ENCODE measurements at regions of chr22 and their contacts with region 1.

Region 1: GRCh38 chr22:37267135-37267587 is 15.1 kb upstream of the CYTH4 start:
- DNase-seq: peak; percentile 46 to 84 (median 70)
- ATAC-seq: peak; percentile 91
- H3K4me3 ChIP-seq: peak overlapping the region; percentile 71
- H3K4me3 Mint-ChIP-seq: peak overlapping the region; percentile 87
- H3K27ac ChIP-seq: peak overlapping the region; percentile 67 to 86
- H3K27ac Mint-ChIP-seq: peak overlapping the region; percentile 91
- H3K4me1 ChIP-seq: peaks cover 24% of the 10 kb centered on the region
- H3K4me1 Mint-ChIP-seq: peaks cover 40% of the 10 kb centered on the region
- H3K27me3 ChIP-seq: no peaks in the 10 kb centered on the region
- H3K27me3 Mint-ChIP-seq: no peaks in the 10 kb centered on the region
- CTCF ChIP-seq: peak; percentile 99

Region 2: GRCh38 chr22:37282385-37282677 is 15.2 kb after region 1 on chr22 and contains the start of gene CYTH4:
- CTCF ChIA-PET with region 1: interaction called, 11 read pairs
- POLR2A ChIA-PET with region 1: interaction called, 19 read pairs
- intact Hi-C with region 1: loop called (anchors 2 kb)
- DNase-seq: peak; percentile 36 to 87 (median 76)
- ATAC-seq: peak; percentile 86
- H3K4me3 ChIP-seq: peak within 1 kb of the TSS; percentile 99
- H3K4me3 Mint-ChIP-seq: peak within 1 kb of the TSS; percentile 97
- H3K27ac ChIP-seq: peak within 1 kb of the TSS; percentile 78 to 90
- H3K27ac Mint-ChIP-seq: peak within 1 kb of the TSS; percentile 96
- H3K4me1 ChIP-seq: peaks cover 50% of the 10 kb centered on the region
- H3K4me1 Mint-ChIP-seq: peaks cover 61% of the 10 kb centered on the region
- H3K27me3 ChIP-seq: no peaks in the 10 kb centered on the region
- H3K27me3 Mint-ChIP-seq: no peaks in the 10 kb centered on the region
- CTCF ChIP-seq: no peak
- total RNA-seq, gene CYTH4: 134 to 138 TPM

Region 3: DNA sequence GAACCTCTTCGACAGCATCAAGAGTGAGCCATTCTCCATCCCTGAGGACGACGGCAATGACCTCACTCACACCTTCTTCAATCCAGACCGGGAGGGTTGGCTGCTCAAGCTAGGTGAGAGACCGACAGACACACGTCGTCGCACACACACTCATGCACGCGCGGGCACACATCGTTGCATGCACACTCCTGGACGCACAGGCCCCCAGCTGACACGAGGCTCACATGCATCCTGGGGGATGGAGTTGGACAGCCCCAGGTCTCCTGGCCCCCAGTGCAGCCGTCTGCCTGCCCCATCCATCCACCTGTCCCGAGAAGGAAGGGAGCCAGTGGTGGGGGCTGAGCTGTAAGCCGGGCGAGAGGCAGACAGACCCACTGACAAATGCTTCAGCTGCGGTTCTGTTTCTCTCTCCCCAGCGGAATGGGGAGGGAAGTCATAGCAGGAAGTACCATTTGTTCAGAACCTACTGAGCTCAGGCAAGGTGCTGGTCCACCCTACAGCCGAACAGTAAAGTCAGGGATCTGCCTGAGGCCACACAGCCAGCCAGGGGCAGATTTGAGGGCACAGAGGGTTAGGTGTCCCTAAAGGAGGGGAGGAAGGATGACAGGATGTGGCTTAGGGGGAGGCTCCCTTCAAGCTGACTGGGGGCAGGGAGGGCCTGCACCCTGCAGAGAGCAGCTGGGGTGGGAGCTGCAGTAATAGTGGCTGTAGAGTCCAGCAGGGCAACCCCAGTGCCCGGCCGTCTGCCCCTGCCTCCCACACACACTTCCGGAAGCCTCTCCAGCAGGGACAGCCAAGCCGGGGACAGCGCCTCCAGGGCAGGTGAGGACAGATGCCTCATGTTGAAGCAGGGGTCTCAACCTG is 42.3 kb after region 1 on chr22:
- CTCF ChIA-PET with region 1: interaction called, 3 read pairs
- POLR2A ChIA-PET with region 1: interaction called, 20 read pairs
- intact Hi-C with region 1: no loop called
- DNase-seq: peak; percentile 13 to 88 (median 49)
- ATAC-seq: peak; percentile 56
- H3K4me3 ChIP-seq: peak overlapping the region; percentile 30
- H3K4me3 Mint-ChIP-seq: peak overlapping the region; percentile 77
- H3K27ac ChIP-seq: peak overlapping the region; percentile 47 to 81
- H3K27ac Mint-ChIP-seq: peak overlapping the region; percentile 95
- H3K4me1 ChIP-seq: peaks cover 100% of the 10 kb centered on the region
- H3K4me1 Mint-ChIP-seq: peaks cover 86% of the 10 kb centered on the region
- H3K27me3 ChIP-seq: no peaks in the 10 kb centered on the region
- H3K27me3 Mint-ChIP-seq: no peaks in the 10 kb centered on the region
- CTCF ChIP-seq: no peak

Region 4: DNA sequence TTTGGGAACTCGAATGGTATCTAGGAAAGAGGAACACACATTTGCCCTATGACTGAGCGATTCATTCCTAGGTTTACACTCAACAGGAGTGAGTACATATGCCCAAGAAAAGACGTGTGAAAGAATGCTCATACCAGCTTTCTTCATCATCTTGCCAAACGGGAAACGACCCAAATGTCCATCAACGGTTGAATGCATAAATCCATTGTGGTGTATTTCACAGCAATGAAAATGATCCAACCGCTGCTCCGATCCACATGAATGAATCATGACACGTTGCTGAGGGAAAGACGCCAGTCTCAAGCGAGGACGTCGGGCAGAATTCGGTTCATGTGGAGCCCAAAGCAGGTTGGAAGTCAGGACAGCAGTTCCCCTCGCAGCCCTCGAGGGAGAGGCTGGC is 86.7 kb after region 1 on chr22:
- CTCF ChIA-PET with region 1: no interaction called
- POLR2A ChIA-PET with region 1: no interaction called
- intact Hi-C with region 1: no loop called
- DNase-seq: no peak
- ATAC-seq: no peak
- H3K4me3 ChIP-seq: no peak overlapping the region
- H3K4me3 Mint-ChIP-seq: no peak overlapping the region
- H3K27ac ChIP-seq: no peak overlapping the region
- H3K27ac Mint-ChIP-seq: no peak overlapping the region
- H3K4me1 ChIP-seq: no peaks in the 10 kb centered on the region
- H3K4me1 Mint-ChIP-seq: no peaks in the 10 kb centered on the region
- H3K27me3 ChIP-seq: no peaks in the 10 kb centered on the region
- H3K27me3 Mint-ChIP-seq: no peaks in the 10 kb centered on the region
- CTCF ChIP-seq: no peak

Region 5: DNA sequence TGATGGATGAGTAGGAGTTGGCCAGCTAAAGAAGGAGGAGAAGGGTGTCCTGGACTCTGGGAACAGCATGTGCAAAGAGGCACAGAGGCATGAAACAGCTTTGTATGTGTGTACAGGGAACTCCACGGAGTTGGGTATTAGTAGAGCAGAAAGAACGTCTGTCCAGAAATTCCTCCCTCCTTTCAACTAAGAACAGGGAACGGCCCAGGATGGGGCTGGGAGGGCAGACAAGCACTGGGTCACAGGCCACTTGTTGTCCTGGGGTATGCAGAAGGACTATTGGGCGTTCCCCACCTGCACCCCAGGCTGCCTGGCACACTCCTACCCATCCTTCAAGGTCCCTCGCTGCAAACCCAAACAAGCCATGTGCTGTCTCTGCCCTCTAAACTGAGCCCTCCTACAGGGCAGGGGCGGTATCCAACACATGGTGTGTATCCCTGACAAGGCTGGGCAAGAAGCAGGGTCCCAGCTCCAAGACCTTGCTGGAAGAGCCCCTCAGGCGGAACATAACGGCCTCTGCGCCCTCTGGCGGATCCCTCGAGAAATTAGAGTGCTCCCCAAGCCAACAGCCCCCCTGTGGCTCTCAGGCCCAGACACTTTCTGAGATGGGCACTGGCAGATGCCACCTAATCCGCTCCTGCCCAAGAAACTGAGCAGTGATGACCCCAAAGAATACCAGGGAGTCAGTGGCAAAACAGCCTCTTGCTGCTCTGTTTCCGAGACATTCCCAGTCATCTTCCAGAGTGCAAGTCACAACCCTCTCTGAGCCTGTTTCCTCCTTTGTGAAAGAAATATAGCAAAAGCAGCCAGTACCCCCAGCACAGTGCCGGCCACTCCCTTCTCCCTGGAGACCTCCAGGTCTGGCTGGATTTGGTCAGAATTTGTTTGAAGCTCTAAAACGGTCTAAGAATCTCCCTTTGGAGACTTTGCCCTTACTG is 161.8 kb after region 1 on chr22:
- CTCF ChIA-PET with region 1: interaction called, 3 read pairs
- POLR2A ChIA-PET with region 1: no interaction called
- intact Hi-C with region 1: loop called (anchors 1 to 2 kb)
- DNase-seq: peak; percentile 35 to 83 (median 55)
- ATAC-seq: peak; percentile 62
- H3K4me3 ChIP-seq: no peak overlapping the region
- H3K4me3 Mint-ChIP-seq: peak overlapping the region; percentile 38
- H3K27ac ChIP-seq: no peak overlapping the region
- H3K27ac Mint-ChIP-seq: no peak overlapping the region
- H3K4me1 ChIP-seq: peaks cover 24% of the 10 kb centered on the region
- H3K4me1 Mint-ChIP-seq: no peaks in the 10 kb centered on the region
- H3K27me3 ChIP-seq: peaks cover 43 to 47% of the 10 kb centered on the region in 2 experiments
- H3K27me3 Mint-ChIP-seq: peaks cover 83% of the 10 kb centered on the region
- CTCF ChIP-seq: peak; percentile 74

Region 6: GRCh38 chr22:37457093-37457893 is 190.1 kb after region 1 on chr22:
- CTCF ChIA-PET with region 1: no interaction called
- POLR2A ChIA-PET with region 1: no interaction called
- intact Hi-C with region 1: loop called (anchors 1 kb)
- DNase-seq: peak; percentile 74 to 90 (median 85)
- ATAC-seq: peak; percentile 98
- H3K4me3 ChIP-seq: no peak overlapping the region
- H3K4me3 Mint-ChIP-seq: no peak overlapping the region
- H3K27ac ChIP-seq: no peak overlapping the region
- H3K27ac Mint-ChIP-seq: no peak overlapping the region
- H3K4me1 ChIP-seq: peaks cover 5% of the 10 kb centered on the region
- H3K4me1 Mint-ChIP-seq: peaks cover 6% of the 10 kb centered on the region
- H3K27me3 ChIP-seq: no peaks in the 10 kb centered on the region
- H3K27me3 Mint-ChIP-seq: no peaks in the 10 kb centered on the region
- CTCF ChIP-seq: peak; percentile 92

Region 7: DNA sequence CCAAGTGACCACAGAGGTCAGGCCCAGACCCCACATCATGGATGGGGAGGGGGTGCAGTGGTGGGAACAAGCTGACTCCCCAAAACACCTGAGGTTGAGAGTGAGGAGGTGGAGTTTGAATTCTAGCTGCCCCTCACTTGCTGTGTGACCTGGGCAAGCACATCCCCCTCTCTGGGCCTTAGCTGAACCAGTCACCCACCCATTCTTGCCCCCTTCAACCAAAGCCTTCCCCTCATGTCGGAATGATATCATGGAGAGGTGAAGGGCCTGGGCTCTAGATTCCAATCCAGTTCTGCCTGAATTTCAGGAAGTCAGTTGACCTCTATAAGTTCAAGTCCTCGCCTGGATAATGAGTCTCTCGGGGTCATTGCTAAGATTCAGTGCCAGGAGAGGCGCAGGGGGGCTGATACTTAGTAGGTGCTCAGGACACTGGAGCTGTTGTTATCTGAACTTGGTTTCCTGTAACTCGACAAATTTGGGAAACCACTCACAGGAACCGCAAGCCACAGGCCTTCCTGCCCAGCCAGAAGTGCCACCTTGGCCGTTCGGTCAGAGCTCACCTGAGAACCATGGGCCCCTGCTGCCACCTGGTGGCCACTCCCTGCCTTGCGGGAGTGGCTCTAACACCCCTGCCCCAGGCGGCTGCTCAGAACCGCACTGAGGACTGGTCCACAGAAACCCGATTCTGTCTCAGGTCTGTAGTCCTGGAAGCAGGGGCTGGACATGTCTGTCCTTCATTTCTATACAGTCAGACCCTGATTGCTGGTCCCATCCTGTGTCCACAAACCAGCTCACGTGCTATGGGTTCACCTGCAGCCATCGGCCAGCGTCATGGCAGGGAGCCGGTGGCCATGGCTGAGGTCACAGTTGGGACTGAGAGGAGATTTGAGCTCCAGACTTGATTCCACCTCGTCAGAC is 300.0 kb after region 1 on chr22:
- CTCF ChIA-PET with region 1: no interaction called
- POLR2A ChIA-PET with region 1: no interaction called
- intact Hi-C with region 1: loop called in 1 of 2 experiments (anchors 2 kb)
- DNase-seq: peak; percentile 79 to 96 (median 89)
- ATAC-seq: peak; percentile 90
- H3K4me3 ChIP-seq: peak overlapping the region; percentile 22
- H3K4me3 Mint-ChIP-seq: peak overlapping the region; percentile 69
- H3K27ac ChIP-seq: no peak overlapping the region
- H3K27ac Mint-ChIP-seq: no peak overlapping the region
- H3K4me1 ChIP-seq: peaks cover 28% of the 10 kb centered on the region
- H3K4me1 Mint-ChIP-seq: peaks cover 29% of the 10 kb centered on the region
- H3K27me3 ChIP-seq: peaks cover 9 to 17% of the 10 kb centered on the region in 2 experiments
- H3K27me3 Mint-ChIP-seq: peaks cover 26% of the 10 kb centered on the region
- CTCF ChIP-seq: peak; percentile 92

Measured in CD4-positive, alpha-beta T cell (primary cell).